ENCODE measurements at regions of chr18 and their contacts with region 1.

Region 1: GRCh38 chr18:52615943-52616342 is 275.9 kb downstream of the DCC start:
- DNase-seq: no peak
- ATAC-seq: no peak
- H3K4me3 ChIP-seq: no peak overlapping the region
- H3K27ac ChIP-seq: no peak overlapping the region
- H3K4me1 ChIP-seq: no peaks in the 10 kb centered on the region
- H3K27me3 ChIP-seq: no peaks in the 10 kb centered on the region
- CTCF ChIP-seq: no peak

Region 2: GRCh38 chr18:52376104-52376503 is 239.8 kb before region 1 on chr18:
- intact Hi-C with region 1: no loop called
- DNase-seq: no peak
- ATAC-seq: no peak
- H3K4me3 ChIP-seq: no peak overlapping the region
- H3K27ac ChIP-seq: no peak overlapping the region
- H3K4me1 ChIP-seq: no peaks in the 10 kb centered on the region
- H3K27me3 ChIP-seq: no peaks in the 10 kb centered on the region
- CTCF ChIP-seq: no peak

Region 3: GRCh38 chr18:52694804-52695203 is 78.9 kb after region 1 on chr18:
- intact Hi-C with region 1: loop called (anchors 10 kb)
- DNase-seq: no peak
- ATAC-seq: no peak
- H3K4me3 ChIP-seq: no peak overlapping the region
- H3K27ac ChIP-seq: no peak overlapping the region
- H3K4me1 ChIP-seq: no peaks in the 10 kb centered on the region
- H3K27me3 ChIP-seq: no peaks in the 10 kb centered on the region
- CTCF ChIP-seq: no peak